Pancreas (tissue), 10 donors: ENCODE measurements at regions of chr9 and their contacts with region 1.

Region 1: DNA sequence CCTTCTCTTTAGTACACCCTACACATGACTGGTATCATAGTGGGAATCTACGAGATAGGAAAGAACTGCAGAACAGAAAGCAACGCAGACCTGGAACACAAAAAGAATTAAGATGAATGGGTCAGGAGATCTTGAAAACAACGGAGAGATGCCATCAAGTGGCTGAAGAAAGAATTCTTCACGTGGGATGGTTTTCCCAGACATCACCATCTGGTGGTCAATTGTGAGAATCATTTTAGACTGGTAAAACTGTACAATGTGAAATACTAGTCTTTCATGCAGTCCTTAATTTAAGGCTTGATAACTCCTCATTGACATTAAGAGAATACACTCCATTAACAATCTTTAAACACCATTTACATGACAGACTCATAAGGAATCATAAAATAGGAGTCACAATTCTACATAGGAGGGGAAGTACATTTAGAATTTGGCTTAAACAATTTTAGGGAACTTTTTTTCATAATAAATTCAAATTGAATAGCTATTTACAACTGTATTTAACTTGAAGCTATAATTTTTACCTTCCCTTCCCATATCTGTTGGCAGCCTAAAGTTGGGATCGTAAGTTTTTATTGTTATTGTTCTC is 128.4 kb upstream of the TRPM3 start:
- DNase-seq: peak in 1 of 6 donors; percentile 31
- ATAC-seq: peak; percentile 60 to 92 (median 88)
- H3K4me3 ChIP-seq: no peak overlapping the region
- H3K27ac ChIP-seq: no peak overlapping the region
- H3K4me1 ChIP-seq: no peaks in the 10 kb centered on the region
- H3K27me3 ChIP-seq: no peaks in the 10 kb centered on the region
- CTCF ChIP-seq: peak in 3 of 4 donors; percentile 23 to 62 (median 32)

Region 2: DNA sequence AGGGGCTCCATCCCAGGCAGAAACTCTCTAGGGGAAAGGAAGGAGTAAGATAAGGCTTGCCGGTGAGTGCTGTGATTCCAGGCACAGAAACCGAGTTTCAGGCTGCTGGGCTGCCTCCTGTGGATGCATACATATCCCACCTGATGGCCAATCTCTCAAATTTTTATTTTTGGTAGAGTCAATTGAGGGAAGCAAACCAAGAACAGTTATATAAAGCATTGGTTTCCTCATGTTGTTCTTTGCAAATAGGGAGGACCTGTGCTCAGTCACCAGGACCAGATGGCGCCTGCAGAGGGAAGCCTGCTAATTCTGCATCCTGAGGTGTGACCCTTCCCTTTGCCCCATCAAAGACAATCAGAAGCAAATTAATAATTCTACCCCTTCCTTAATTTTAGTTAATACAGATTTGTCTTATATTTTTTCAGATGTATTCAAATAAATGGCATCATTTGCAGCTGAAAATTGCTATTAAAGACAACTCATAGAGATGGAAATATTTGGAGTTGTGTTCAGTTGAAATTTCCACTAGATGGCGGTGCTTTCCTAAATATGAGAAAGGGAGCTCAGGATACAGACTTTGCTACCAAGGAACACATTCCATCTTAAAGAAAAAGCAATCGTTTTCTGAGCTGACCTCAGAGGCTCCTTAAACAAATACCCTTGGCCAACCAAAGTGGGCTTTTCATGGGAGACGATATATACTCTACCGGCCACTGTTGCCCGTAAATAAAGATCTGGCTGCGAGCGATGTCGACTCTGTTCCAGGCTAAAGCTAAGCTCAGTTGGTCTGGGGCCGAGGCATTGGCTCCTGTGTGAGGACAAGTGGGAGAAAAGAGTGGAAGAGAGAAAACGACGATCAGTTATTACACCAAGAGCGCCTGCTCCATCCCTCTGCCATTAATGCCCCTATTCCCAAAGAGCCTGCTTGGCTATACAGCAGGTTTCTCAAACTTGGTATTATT is 609.7 kb before region 1 on chr9:
- intact Hi-C with region 1: loop called in 1 of 3 experiments (anchors 5 kb)
- DNase-seq: no peak
- ATAC-seq: peak; percentile 38 to 85 (median 80)
- H3K4me3 ChIP-seq: no peak overlapping the region
- H3K27ac ChIP-seq: no peak overlapping the region
- H3K4me1 ChIP-seq: no peaks in the 10 kb centered on the region
- H3K27me3 ChIP-seq: no peaks in the 10 kb centered on the region
- CTCF ChIP-seq: peak; percentile 14 to 48 (median 40)

Region 3: GRCh38 chr9:70911791-70912190 is 338.0 kb before region 1 on chr9:
- intact Hi-C with region 1: no loop called
- DNase-seq: no peak
- ATAC-seq: no peak
- H3K4me3 ChIP-seq: no peak overlapping the region
- H3K27ac ChIP-seq: no peak overlapping the region
- H3K4me1 ChIP-seq: no peaks in the 10 kb centered on the region
- H3K27me3 ChIP-seq: no peaks in the 10 kb centered on the region
- CTCF ChIP-seq: no peak

Region 4: GRCh38 chr9:70924895-70925547 is 324.8 kb before region 1 on chr9:
- intact Hi-C with region 1: loop called in 1 of 3 experiments (anchors 5 kb)
- DNase-seq: peak in 4 of 6 donors; percentile 12 to 57 (median 18)
- ATAC-seq: peak; percentile 89 to 99 (median 95)
- H3K4me3 ChIP-seq: peak overlapping the region in 1 of 4 donors; percentile 3
- H3K27ac ChIP-seq: no peak overlapping the region
- H3K4me1 ChIP-seq: no peaks in the 10 kb centered on the region
- H3K27me3 ChIP-seq: no peaks in the 10 kb centered on the region
- CTCF ChIP-seq: peak; percentile 42 to 65 (median 50)